ENCODE measurements at regions of chr4 and their contacts with region 1.

Region 1: GRCh38 chr4:48127682-48128394 is 6.2 kb downstream of the TXK start:
- DNase-seq: peak; percentile 88 to 89
- H3K4me3 ChIP-seq: no peak overlapping the region
- H3K4me3 Mint-ChIP-seq: peak overlapping the region; percentile 66
- H3K27ac Mint-ChIP-seq: peak overlapping the region; percentile 94
- H3K4me1 ChIP-seq: peaks cover 59% of the 10 kb centered on the region
- H3K4me1 Mint-ChIP-seq: peaks cover 41% of the 10 kb centered on the region
- H3K27me3 ChIP-seq: no peaks in the 10 kb centered on the region
- H3K27me3 Mint-ChIP-seq: no peaks in the 10 kb centered on the region
- CTCF ChIP-seq: peak; percentile 72 to 77

Region 2: GRCh38 chr4:48071121-48071612 is 56.7 kb before region 1 on chr4:
- CTCF ChIA-PET with region 1: no interaction called
- POLR2A ChIA-PET with region 1: no interaction called
- intact Hi-C with region 1: loop called (anchors 5 kb)
- DNase-seq: peak; percentile 78 to 87
- H3K4me3 ChIP-seq: no peak overlapping the region
- H3K4me3 Mint-ChIP-seq: peak overlapping the region; percentile 35
- H3K27ac Mint-ChIP-seq: peak overlapping the region; percentile 84
- H3K4me1 ChIP-seq: peaks cover 44% of the 10 kb centered on the region
- H3K4me1 Mint-ChIP-seq: peaks cover 21% of the 10 kb centered on the region
- H3K27me3 ChIP-seq: no peaks in the 10 kb centered on the region
- H3K27me3 Mint-ChIP-seq: no peaks in the 10 kb centered on the region
- CTCF ChIP-seq: peak in 1 of 2 experiments; percentile 10

Region 3: DNA sequence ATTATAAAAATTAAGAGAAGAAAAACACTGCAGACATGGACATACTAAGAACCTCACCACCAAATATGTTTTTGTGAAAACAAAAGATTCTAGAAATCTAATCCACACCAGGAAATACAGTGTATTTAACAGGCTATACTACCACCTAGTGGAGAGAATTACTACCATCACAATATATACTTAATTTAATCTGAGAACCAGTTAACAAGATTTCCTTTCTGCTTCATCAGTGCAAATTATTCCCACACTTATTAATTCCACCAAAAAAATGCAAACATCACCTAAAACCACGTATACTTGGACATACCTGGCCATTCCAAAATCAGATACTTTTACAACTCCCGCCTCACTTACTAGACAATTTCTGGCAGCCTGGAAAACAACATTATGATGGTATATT is 13.2 kb after region 1 on chr4:
- CTCF ChIA-PET with region 1: interaction called, 7 read pairs
- POLR2A ChIA-PET with region 1: no interaction called
- intact Hi-C with region 1: loop called (anchors 1 kb)
- DNase-seq: peak in 1 of 2 experiments; percentile 18
- H3K4me3 ChIP-seq: no peak overlapping the region
- H3K4me3 Mint-ChIP-seq: no peak overlapping the region
- H3K27ac Mint-ChIP-seq: no peak overlapping the region
- H3K4me1 ChIP-seq: no peaks in the 10 kb centered on the region
- H3K4me1 Mint-ChIP-seq: peaks cover 11% of the 10 kb centered on the region
- H3K27me3 ChIP-seq: no peaks in the 10 kb centered on the region
- H3K27me3 Mint-ChIP-seq: no peaks in the 10 kb centered on the region
- CTCF ChIP-seq: peak; percentile 41 to 71

Region 4: DNA sequence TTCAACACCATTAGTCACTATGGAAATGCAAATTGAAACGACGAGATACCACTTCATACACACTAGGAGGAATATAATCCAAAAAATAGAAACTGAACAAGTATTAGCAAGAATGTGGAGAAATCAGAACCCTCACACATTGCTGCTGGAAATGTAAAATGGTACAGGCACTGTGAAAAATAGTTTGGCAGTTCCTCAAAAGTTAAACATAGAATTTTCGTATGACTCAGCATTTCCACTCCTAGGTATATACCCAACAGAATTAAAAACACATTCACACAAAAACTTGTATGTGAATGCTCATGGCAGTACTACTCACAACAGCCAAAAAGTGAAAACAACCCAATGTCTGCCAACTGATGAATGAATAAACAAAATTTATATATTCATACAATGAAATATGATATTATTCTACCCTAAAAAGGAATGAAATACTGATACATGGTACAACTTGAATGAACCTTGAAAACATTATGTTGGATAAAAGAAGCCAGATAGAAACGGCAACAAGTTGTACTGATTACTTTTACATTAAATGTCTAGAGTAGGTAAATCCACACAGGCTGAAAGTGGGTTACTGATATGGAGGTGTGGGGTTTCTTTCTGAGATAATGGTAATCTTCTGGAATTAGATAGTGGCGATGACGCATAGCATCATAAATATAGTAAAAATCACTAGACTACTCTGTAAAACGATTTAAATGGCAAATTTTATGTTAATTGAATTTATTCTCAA is 119.5 kb after region 1 on chr4:
- CTCF ChIA-PET with region 1: no interaction called
- POLR2A ChIA-PET with region 1: no interaction called
- intact Hi-C with region 1: no loop called
- DNase-seq: no peak
- H3K4me3 ChIP-seq: no peak overlapping the region
- H3K4me3 Mint-ChIP-seq: no peak overlapping the region
- H3K27ac Mint-ChIP-seq: no peak overlapping the region
- H3K4me1 ChIP-seq: no peaks in the 10 kb centered on the region
- H3K4me1 Mint-ChIP-seq: no peaks in the 10 kb centered on the region
- H3K27me3 ChIP-seq: no peaks in the 10 kb centered on the region
- H3K27me3 Mint-ChIP-seq: no peaks in the 10 kb centered on the region
- CTCF ChIP-seq: no peak

Region 5: DNA sequence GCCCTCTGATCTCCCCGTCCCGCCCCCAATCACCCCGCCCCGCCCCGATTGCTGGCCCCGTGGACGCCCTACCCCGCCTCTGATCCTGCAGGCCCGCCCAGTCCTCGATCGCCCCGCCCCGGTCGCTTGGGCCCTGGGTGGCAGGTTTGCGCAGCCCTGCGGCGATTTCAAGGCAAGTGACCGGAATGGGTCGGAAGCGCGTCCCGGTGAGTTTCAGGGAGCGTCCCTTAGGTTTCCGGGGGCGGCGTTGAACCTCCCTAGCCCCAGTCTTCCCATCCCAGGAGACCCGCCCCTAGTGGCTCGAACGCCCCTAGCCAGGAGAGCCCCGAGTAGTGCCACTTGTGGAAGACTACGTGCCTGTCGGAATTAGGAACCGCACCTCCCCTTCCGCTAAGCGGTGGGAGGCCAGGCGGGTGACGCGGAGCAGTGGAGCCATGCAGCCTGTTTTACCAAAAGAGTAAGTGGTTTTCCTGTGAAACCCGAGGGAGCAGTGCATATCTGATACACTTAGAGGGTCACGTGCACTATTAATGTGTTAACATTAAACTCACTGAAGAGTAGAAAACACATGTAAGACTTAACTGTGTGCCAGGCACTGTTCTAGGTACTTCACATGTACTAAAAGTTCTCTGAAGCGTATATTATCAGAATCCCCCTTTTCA is 142.2 kb after region 1 on chr4:
- CTCF ChIA-PET with region 1: interaction called, 8 read pairs
- POLR2A ChIA-PET with region 1: no interaction called
- intact Hi-C with region 1: loop called (anchors 5 kb)
- DNase-seq: peak; percentile 94
- H3K4me3 ChIP-seq: peak overlapping the region; percentile 89
- H3K4me3 Mint-ChIP-seq: peak overlapping the region; percentile 91
- H3K27ac Mint-ChIP-seq: peak overlapping the region; percentile 72
- H3K4me1 ChIP-seq: 0 out of 2 replicates have a peak, but pooled peaks cover 7% of the 10 kb centered on the region
- H3K4me1 Mint-ChIP-seq: no peaks in the 10 kb centered on the region
- H3K27me3 ChIP-seq: no peaks in the 10 kb centered on the region
- H3K27me3 Mint-ChIP-seq: no peaks in the 10 kb centered on the region
- CTCF ChIP-seq: peak in 1 of 2 experiments; percentile 25

Region 6: DNA sequence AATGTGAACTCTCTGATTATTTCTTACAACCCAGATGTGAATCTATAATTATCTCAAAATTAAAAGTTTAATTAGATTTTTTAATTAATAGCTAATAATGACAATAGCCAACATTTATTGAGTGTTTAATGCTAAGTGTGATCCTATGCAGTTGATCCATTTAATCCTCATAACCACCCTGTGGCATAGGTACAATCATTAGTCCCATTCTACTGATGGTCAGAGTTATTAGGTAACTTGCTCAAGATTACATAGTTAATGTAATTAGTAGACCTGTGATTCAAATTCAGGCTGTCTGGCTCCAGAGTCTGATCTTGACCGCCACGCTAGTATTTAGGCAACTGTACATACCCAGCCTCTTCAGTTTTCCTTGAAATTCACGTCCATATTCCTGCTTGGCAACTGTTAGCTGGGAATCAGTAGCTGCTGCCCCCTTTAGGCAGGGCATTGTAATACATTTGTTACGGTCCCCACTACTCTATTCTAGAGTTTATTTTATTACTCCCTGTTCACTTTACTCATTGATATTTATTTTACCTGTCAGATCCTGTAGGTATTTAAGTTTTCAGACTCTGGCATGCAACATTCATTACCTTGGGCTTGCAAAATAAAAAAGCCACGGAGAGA is 162.4 kb after region 1 on chr4:
- CTCF ChIA-PET with region 1: interaction called, 3 read pairs
- POLR2A ChIA-PET with region 1: no interaction called
- intact Hi-C with region 1: loop called (anchors 1 kb)
- DNase-seq: peak in 1 of 2 experiments; percentile 46
- H3K4me3 ChIP-seq: no peak overlapping the region
- H3K4me3 Mint-ChIP-seq: no peak overlapping the region
- H3K27ac Mint-ChIP-seq: no peak overlapping the region
- H3K4me1 ChIP-seq: no peaks in the 10 kb centered on the region
- H3K4me1 Mint-ChIP-seq: peaks cover 2% of the 10 kb centered on the region
- H3K27me3 ChIP-seq: no peaks in the 10 kb centered on the region
- H3K27me3 Mint-ChIP-seq: no peaks in the 10 kb centered on the region
- CTCF ChIP-seq: peak; percentile 39 to 60

Region 7: DNA sequence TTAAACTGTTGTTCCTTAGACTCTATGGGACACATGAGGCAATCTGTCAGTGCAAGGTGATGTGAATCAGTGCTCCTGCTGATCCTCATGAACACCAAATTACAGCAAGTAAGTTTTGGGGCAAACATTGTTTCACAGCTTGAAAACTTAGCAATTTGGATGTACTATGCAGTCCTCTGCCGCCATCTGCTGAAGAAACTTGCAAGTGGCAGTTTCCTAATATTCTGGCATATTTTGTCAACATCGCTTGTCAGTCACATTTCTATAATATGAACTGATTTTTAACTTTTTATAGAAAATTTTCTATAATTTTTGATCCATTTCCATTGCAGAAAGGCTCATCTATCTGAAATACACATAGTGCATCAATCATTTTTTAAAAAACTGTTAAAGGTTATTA is 418.5 kb after region 1 on chr4:
- CTCF ChIA-PET with region 1: interaction called, 6 read pairs
- POLR2A ChIA-PET with region 1: no interaction called
- intact Hi-C with region 1: loop called (anchors 1 kb)
- DNase-seq: peak; percentile 40 to 43
- H3K4me3 ChIP-seq: no peak overlapping the region
- H3K4me3 Mint-ChIP-seq: no peak overlapping the region
- H3K27ac Mint-ChIP-seq: no peak overlapping the region
- H3K4me1 ChIP-seq: no peaks in the 10 kb centered on the region
- H3K4me1 Mint-ChIP-seq: no peaks in the 10 kb centered on the region
- H3K27me3 ChIP-seq: no peaks in the 10 kb centered on the region
- H3K27me3 Mint-ChIP-seq: no peaks in the 10 kb centered on the region
- CTCF ChIP-seq: peak; percentile 66 to 73

Measured in Caco-2 (cell line).